ENCODE measurements at regions of chr20 and their contacts with region 1.

Region 1: GRCh38 chr20:57596998-57597939 is 23.0 kb downstream of the ZBP1 start:
- DNase-seq: peak; percentile 84
- ATAC-seq: peak; percentile 86
- H3K4me3 ChIP-seq: no peak overlapping the region
- H3K27ac ChIP-seq: no peak overlapping the region
- H3K4me1 ChIP-seq: peaks cover 7% of the 10 kb centered on the region
- H3K27me3 ChIP-seq: no peaks in the 10 kb centered on the region
- CTCF ChIP-seq: peak; percentile 95

Region 2: GRCh38 chr20:56957737-56958553 is 639.3 kb before region 1 on chr20:
- intact Hi-C with region 1: no loop called
- DNase-seq: no peak
- ATAC-seq: no peak
- H3K4me3 ChIP-seq: no peak overlapping the region
- H3K27ac ChIP-seq: no peak overlapping the region
- H3K4me1 ChIP-seq: no peaks in the 10 kb centered on the region
- H3K27me3 ChIP-seq: peaks cover 60% of the 10 kb centered on the region
- CTCF ChIP-seq: no peak

Region 3: DNA sequence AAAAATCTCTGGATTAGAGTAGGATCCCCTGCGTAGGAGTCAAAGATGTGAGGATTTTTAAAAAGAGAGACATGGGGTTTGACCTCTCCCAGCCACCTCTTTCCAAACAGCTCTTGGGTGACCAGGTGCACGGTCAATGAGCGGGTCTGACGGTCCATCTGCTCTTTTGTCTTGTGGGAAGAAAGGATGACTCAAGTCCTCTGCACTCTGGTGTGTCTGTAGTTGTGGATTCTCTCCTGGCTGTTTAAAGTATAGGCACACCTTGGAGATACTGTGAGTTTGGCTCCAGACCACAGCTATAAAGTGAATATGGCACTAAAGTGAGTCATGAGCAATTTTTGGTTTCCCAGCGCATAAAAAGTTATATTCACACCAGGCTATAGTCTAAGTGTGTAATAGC is 540.6 kb before region 1 on chr20:
- intact Hi-C with region 1: no loop called
- DNase-seq: peak; percentile 6
- ATAC-seq: no peak
- H3K4me3 ChIP-seq: no peak overlapping the region
- H3K27ac ChIP-seq: no peak overlapping the region
- H3K4me1 ChIP-seq: no peaks in the 10 kb centered on the region
- H3K27me3 ChIP-seq: peaks cover 15% of the 10 kb centered on the region
- CTCF ChIP-seq: no peak

Region 4: DNA sequence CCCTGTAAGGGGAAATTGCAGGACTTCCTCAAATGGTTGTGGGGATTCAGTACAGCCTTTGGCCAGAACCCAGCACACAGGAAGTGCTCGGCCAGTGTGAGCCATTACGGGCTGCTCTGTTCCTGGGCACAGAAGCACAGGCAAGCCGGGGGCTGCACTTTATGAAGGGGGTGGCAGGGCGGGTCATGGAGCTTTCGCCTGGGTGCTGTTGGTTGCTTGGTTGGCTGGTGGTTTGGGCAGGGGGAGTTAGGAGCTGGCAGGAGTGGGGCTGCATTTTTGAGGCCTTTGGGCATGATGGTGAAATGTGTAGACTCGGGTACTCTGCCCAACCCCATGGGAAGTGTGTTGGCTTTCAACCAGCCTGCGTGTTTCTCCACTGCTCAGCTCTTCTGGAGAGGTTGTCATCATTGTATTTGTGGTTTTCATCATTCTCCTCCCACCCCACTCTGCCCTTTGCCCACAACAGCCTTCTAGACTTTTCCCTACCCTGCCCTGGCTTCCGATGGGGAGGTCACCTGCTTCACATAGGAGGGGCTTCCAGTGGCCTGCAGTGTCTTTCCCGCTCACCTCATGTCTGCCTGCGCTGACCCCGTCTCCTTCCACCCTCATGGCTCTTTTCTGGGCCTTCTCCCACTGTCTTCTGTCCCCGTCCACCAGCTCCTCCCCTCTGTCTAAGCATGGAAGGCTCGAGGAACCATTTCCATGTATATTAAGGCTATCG is 222.2 kb before region 1 on chr20:
- intact Hi-C with region 1: loop called (anchors 10 kb)
- DNase-seq: peak; percentile 73
- ATAC-seq: peak; percentile 92
- H3K4me3 ChIP-seq: peak overlapping the region; percentile 28
- H3K27ac ChIP-seq: peak overlapping the region; percentile 42
- H3K4me1 ChIP-seq: peaks cover 9% of the 10 kb centered on the region
- H3K27me3 ChIP-seq: no peaks in the 10 kb centered on the region
- CTCF ChIP-seq: no peak

Region 5: DNA sequence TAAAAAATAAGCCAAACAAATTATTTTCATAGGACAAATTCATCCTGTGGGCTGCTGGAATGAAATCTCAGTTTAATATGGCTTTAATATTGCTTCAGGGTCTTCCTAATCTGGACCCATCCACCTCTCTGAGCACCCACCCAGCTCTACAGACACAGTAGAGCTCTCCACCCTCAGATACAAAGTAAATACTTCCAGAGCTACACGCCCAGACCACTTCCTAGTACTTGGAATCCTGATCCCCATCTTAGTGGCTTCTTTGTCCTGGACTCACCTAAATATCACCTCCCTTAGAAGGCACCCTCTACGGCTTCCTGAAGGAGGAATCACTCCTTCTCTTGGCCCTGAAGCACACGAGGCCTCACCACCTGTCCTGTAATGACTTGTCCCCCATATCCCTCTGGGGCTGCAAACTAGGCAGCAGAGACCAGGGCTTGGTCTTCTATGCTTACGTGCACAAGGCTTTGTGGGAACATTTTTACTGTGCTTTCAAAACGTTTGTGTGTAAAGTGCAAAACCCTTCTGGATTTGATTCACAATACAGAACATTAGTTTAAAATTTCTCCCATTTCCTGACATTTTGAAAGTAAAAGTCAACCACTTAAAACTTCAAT is 74.8 kb before region 1 on chr20:
- intact Hi-C with region 1: loop called (anchors 5 kb)
- DNase-seq: no peak
- ATAC-seq: no peak
- H3K4me3 ChIP-seq: no peak overlapping the region
- H3K27ac ChIP-seq: no peak overlapping the region
- H3K4me1 ChIP-seq: no peaks in the 10 kb centered on the region
- H3K27me3 ChIP-seq: no peaks in the 10 kb centered on the region
- CTCF ChIP-seq: no peak

Region 6: GRCh38 chr20:58209652-58210397 is 612.6 kb after region 1 on chr20:
- intact Hi-C with region 1: loop called (anchors 5 kb)
- DNase-seq: peak; percentile 92
- ATAC-seq: peak; percentile 95
- H3K4me3 ChIP-seq: no peak overlapping the region
- H3K27ac ChIP-seq: no peak overlapping the region
- H3K4me1 ChIP-seq: no peaks in the 10 kb centered on the region
- H3K27me3 ChIP-seq: peaks cover 8% of the 10 kb centered on the region
- CTCF ChIP-seq: peak; percentile 100

Measured in upper lobe of right lung (tissue), 1 donor.